ENCODE measurements at regions of chr5 and their contacts with region 1.

Region 1: DNA sequence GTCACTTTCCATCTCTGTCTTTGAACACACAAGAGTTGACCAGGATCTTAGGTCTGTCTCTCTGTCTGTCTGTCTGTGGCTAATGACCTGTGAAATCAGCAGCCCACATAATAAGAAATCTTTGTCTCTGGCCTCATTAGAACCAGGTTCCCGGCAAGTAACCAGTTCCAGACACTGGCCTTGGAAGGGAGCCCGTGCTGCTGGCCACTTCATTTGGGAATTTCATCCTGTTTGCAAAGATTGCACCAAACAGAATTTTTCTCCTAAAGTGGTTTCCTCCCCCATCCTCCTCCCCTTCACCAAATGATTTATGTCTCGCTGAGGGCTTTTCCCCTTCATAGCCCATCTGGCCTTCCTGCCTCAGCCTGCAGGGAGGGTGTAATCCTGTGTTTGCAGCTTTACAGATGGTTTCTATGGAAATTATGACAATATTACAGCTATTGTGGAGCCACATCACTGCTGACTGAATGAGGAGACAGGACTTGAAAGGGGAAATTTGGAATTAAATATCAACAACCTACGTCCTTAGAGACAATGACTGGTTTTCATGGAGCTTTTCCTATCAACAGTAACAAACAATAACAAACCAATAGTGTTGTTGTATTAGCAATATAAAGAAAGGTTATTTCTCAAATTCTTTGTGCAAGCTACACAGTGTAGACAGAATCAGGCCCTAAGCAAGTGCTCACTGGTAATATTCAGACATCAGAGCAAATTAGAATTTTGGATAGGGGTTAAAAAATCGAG is 25.7 kb downstream of the DPYSL3 start:
- DNase-seq: peak; percentile 95 to 99 (median 98)
- H3K4me3 ChIP-seq: peak overlapping the region in 2 of 7 experiments; percentile 8 to 38
- H3K27ac ChIP-seq: peak overlapping the region; percentile 99 to 100
- H3K4me1 ChIP-seq: peaks cover 15 to 65% (median 55%) of the 10 kb centered on the region in 4 experiments
- H3K27me3 ChIP-seq: no peaks in the 10 kb centered on the region

Region 2: DNA sequence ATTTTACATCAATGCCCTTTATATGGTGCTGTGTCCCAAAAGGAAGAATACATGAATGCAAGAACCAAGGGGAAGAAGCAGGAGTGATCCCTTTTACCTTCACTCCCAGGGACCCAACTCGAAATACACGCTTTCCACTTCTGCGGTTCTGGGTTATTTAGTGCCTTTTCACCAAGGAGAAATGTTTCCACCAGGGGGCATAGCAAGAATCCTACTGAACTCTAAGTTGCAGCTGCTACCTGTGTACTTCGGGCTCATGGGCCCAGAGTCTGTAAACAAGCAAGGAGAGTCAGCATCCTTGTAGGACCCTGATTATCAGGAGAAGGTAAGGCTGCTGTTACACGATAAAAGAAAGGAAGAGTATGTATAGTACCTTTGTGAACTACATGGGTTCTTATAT is 19.9 kb before region 1 on chr5:
- CTCF ChIA-PET with region 1: interaction called, 97 read pairs
- POLR2A ChIA-PET with region 1: interaction called, 4 read pairs
- DNase-seq: peak; percentile 77 to 86 (median 82)
- H3K4me3 ChIP-seq: no peak overlapping the region
- H3K27ac ChIP-seq: no peak overlapping the region
- H3K4me1 ChIP-seq: peaks cover 0 to 8% (median 0%) of the 10 kb centered on the region in 4 experiments
- H3K27me3 ChIP-seq: peaks cover 0 to 2% (median 0%) of the 10 kb centered on the region in 5 experiments